GM23248 (cell line): ENCODE measurements at regions of chrX and their contacts with region 1.

Region 1: GRCh38 chrX:153934473-153935325 is at the start of gene NAA10:
- DNase-seq: peak; percentile 88
- H3K4me3 ChIP-seq: peak within 1 kb of the TSS; percentile 86
- H3K27ac ChIP-seq: peak within 1 kb of the TSS; percentile 45
- H3K4me1 ChIP-seq: no peaks in the 10 kb centered on the region
- H3K27me3 ChIP-seq: no peaks in the 10 kb centered on the region
- total RNA-seq, gene NAA10: 105 and 154 TPM in 2 replicates

Region 2: DNA sequence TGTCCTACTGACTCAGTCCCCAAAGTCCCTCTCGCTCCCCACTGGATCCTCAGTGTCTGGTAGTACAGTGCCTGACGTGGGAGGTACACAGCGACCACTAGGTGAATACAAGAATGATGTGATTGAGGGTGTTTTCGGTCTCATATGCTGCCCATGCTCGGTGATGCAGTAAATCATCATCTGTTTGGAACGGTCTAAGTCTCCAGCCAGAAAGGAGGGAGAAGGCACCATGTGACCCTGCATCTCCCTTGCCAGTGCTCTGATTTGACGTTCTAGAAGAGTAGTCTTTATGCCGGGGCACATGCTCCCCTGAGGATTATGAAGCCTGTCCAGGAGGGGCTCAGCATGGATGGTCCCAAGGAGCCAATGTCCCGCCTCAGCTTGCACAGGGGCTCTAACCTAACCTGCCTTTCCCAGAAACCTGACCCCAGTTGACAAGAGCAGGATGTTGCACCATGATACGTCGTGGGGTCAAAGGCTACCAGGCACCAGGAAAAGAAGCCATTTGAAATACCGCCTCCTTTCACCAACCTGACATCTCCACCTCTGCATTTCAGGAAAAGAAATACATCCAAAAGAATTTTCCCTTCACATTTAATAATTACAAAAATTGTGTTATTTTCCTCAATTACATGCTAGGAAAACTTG is 184.4 kb before region 1 on chrX:
- in situ Hi-C with region 1: loop called (anchors 10 kb)
- DNase-seq: no peak
- H3K4me3 ChIP-seq: no peak overlapping the region
- H3K27ac ChIP-seq: no peak overlapping the region
- H3K4me1 ChIP-seq: no peaks in the 10 kb centered on the region
- H3K27me3 ChIP-seq: no peaks in the 10 kb centered on the region

Region 3: GRCh38 chrX:154116426-154117211 is 181.9 kb after region 1 on chrX:
- in situ Hi-C with region 1: no loop called
- DNase-seq: no peak
- H3K4me3 ChIP-seq: no peak overlapping the region
- H3K27ac ChIP-seq: no peak overlapping the region
- H3K4me1 ChIP-seq: no peaks in the 10 kb centered on the region
- H3K27me3 ChIP-seq: no peaks in the 10 kb centered on the region; the same call in 1 of the 2 replicates